ENCODE measurements at regions of chr4 and their contacts with region 1.

Region 1: DNA sequence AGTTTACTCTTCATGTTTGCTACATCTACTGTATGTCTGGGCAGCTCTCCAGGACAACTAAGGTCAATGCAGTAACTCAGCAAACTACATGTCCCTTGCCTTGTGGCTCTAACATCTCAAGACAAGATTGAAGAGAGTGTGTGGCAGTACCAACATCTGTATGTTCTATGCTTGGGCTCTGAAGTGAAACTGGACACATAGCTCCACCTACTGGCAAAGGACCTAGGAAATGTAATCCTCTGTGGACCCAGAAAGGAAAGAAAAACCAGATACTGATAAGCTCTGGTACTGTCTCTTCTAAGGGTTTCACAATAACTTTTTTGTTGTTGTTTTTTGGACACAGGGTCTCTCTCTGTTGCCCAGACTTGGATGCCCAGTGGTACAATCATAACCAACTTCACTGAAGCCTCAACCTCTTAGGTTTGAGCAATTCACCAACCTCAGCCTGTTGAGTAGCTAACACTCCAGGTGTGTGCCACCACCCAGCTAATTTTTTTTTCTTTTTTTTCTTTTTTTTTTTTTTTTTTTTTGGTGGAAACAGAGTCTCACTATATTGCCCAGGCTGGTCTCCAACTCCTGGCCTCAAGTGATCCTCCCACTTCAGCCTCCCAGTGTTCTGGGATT is 64.1 kb downstream of the QDPR start:
- DNase-seq: peak; percentile 90
- H3K4me3 Mint-ChIP-seq: no peak overlapping the region
- H3K27ac Mint-ChIP-seq: no peak overlapping the region
- H3K4me1 Mint-ChIP-seq: peaks cover 4% of the 10 kb centered on the region
- H3K27me3 Mint-ChIP-seq: peaks cover 2% of the 10 kb centered on the region

Region 2: DNA sequence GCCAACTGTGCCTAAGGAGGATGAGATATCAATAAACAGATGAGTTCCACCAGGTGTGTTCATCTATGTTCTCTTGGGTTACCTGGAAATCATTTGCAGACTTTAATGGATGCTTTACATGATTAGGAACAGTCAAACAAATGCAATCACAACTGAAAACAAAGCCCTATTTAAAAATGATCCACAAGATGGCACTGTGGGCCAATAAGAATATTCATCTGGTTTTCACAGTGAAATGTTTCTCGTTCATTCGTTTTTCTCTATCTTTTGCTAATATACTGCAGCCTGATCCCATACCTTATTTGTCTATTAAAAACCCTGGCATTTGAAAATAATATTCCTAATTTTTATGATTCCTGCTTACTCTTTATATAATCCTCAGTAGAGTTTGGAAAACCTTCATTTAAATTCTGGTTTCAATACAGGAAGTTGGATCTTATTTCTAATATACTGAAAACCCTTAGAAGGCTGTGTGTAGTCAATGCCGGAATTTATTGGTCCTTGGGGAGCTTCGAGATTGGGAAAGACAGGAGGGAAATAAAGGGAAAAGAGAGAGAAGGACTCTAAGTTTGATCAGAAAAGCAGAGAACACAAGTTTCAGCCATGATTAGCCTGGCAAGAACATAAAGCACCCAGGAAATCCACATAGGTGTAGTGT is 1157.8 kb before region 1 on chr4:
- intact Hi-C with region 1: loop called (anchors 5 kb)
- DNase-seq: peak; percentile 69
- H3K4me3 Mint-ChIP-seq: no peak overlapping the region
- H3K27ac Mint-ChIP-seq: no peak overlapping the region
- H3K4me1 Mint-ChIP-seq: peaks cover 3% of the 10 kb centered on the region
- H3K27me3 Mint-ChIP-seq: peaks cover 7% of the 10 kb centered on the region

Region 3: GRCh38 chr4:16794816-16795445 is 652.9 kb before region 1 on chr4:
- intact Hi-C with region 1: loop called (anchors 10 kb)
- DNase-seq: peak; percentile 82
- H3K4me3 Mint-ChIP-seq: no peak overlapping the region
- H3K27ac Mint-ChIP-seq: no peak overlapping the region
- H3K4me1 Mint-ChIP-seq: no peaks in the 10 kb centered on the region
- H3K27me3 Mint-ChIP-seq: no peaks in the 10 kb centered on the region

Region 4: GRCh38 chr4:16916719-16917337 is 531.0 kb before region 1 on chr4:
- intact Hi-C with region 1: loop called (anchors 5 kb)
- DNase-seq: peak; percentile 94
- H3K4me3 Mint-ChIP-seq: no peak overlapping the region
- H3K27ac Mint-ChIP-seq: no peak overlapping the region
- H3K4me1 Mint-ChIP-seq: peaks cover 3% of the 10 kb centered on the region
- H3K27me3 Mint-ChIP-seq: peaks cover 3% of the 10 kb centered on the region

Region 5: GRCh38 chr4:17324386-17324830 is 123.4 kb before region 1 on chr4:
- intact Hi-C with region 1: loop called (anchors 1 kb)
- DNase-seq: peak; percentile 84
- H3K4me3 Mint-ChIP-seq: peak overlapping the region; percentile 39
- H3K27ac Mint-ChIP-seq: peak overlapping the region; percentile 48
- H3K4me1 Mint-ChIP-seq: peaks cover 20% of the 10 kb centered on the region
- H3K27me3 Mint-ChIP-seq: no peaks in the 10 kb centered on the region

Region 6: DNA sequence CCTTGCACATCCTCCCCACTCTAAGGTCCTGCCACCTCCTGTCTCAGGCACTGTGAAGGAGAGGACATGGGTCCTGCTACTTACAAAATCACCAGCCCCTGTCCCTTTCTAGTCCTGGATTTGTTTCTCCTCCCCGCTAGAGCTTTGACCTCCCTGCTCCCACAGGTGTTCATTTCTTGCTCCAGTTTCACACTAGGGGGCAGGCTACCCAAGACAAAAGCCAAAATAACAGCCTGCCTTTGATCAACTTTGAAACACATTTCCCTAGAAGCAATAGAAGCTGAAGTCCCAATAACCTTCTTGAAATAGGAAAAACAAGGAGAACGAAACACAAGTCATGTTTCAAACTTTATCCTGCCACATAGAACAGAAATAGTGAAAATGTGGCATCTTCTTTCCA is 100.3 kb before region 1 on chr4:
- intact Hi-C with region 1: loop called (anchors 1 kb)
- DNase-seq: peak; percentile 83
- H3K4me3 Mint-ChIP-seq: no peak overlapping the region
- H3K27ac Mint-ChIP-seq: no peak overlapping the region
- H3K4me1 Mint-ChIP-seq: no peaks in the 10 kb centered on the region
- H3K27me3 Mint-ChIP-seq: peaks cover 6% of the 10 kb centered on the region

Measured in activated CD4-positive, alpha-beta T cell treated with anti-CD3 and anti-CD28 coated beads, Interleukin-2, amount 10 ng/mL, durations not matched to agents 24 days and 14 days (primary cell).